Dendritic cell treated with granulocyte-macrophage colony-stimulating factor and Interleukin-4, amounts not matched to agents 40 ng/mL and 50 ng/mL, for 4 days (primary cell): ENCODE measurements at regions of chr12 and their contacts with region 1.

Region 1: GRCh38 chr12:110501752-110502738 is at the starts of genes RAD9B and VPS29:
- H3K4me3 Mint-ChIP-seq: peak within 1 kb of the TSS; percentile 89
- H3K27ac Mint-ChIP-seq: peak within 1 kb of the TSS; percentile 92
- H3K4me1 Mint-ChIP-seq: peaks cover 28% of the 10 kb centered on the region
- H3K27me3 Mint-ChIP-seq: no peaks in the 10 kb centered on the region

Region 2: GRCh38 chr12:110431957-110432587 is 70.0 kb before region 1 on chr12:
- intact Hi-C with region 1: no loop called
- H3K4me3 Mint-ChIP-seq: no peak overlapping the region
- H3K27ac Mint-ChIP-seq: peak overlapping the region; percentile 93
- H3K4me1 Mint-ChIP-seq: peaks cover 7% of the 10 kb centered on the region
- H3K27me3 Mint-ChIP-seq: no peaks in the 10 kb centered on the region

Region 3: GRCh38 chr12:110468212-110469048 is 33.6 kb before region 1 on chr12 and contains the starts of genes FAM216A and GPN3:
- intact Hi-C with region 1: loop called (anchors 5 kb)
- H3K4me3 Mint-ChIP-seq: peak within 1 kb of the TSS; percentile 96
- H3K27ac Mint-ChIP-seq: peak within 1 kb of the TSS; percentile 84
- H3K4me1 Mint-ChIP-seq: peaks cover 33% of the 10 kb centered on the region
- H3K27me3 Mint-ChIP-seq: no peaks in the 10 kb centered on the region

Region 4: DNA sequence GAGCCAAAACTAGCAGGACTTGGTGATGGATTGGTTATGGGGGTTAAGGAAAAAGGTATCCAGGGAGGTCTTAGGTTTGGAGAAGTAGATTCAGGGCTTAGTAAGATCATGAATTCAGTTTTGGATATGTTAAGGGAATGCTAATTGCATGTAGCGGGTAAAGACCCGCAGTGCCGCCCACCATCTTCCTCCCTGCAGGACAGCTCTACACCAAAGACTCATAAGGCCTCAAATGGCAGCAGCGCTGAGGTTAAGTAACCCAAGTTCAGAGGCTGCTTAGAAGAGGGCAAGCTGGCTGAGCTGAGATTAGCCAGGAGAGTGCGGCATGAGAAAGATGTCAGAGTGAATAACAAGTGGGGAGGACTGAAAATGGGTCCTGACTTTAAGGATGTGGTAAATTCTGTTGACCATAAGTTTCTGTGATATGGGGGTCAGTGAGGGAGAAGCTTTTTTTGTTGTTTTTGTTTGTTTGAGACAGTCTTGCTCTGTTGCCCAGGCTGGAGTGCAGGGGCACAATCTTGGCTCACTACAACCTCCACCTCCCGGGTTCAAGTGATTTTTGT is 26.3 kb after region 1 on chr12:
- intact Hi-C with region 1: no loop called
- H3K4me3 Mint-ChIP-seq: no peak overlapping the region
- H3K27ac Mint-ChIP-seq: no peak overlapping the region
- H3K4me1 Mint-ChIP-seq: no peaks in the 10 kb centered on the region
- H3K27me3 Mint-ChIP-seq: no peaks in the 10 kb centered on the region

Region 5: DNA sequence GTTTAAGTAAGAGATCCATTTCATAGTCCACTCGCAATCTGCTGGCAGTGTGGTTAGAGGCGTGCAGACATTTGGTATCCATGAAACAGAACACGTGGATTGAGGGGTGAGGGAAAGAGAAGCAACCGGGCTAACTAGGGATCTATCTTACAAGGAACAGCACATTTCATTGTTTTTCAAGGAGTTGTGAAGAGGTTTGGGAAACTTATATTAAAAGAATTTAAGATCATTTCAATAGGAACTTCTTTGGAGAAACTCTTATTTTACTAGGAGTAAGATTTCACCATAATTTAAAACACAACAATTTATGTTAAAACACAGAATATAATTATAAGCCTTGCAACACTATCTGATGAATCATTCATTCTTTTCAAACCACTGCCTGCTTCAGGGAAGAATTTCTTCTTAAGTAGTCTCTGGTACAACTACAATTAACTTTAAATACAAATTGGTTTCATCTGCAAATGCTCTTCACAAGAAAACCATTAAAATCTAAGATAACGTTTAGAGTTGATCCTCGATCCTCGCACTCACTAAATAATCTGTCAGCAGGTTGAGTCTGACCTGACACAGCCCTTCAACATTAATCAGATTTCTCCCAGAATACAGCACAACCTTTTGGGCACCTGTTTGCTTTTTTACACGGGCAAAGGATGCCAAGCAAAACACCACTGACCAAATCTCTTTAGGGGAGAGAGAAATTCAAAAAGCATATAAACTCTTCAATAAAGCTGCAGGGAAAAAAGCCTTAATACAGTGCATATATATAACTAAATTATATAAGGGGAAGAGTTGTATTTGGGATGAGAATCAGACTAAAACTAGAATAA is 53.7 kb after region 1 on chr12:
- intact Hi-C with region 1: loop called (anchors 10 kb)
- H3K4me3 Mint-ChIP-seq: no peak overlapping the region
- H3K27ac Mint-ChIP-seq: peak overlapping the region; percentile 50
- H3K4me1 Mint-ChIP-seq: peaks cover 47% of the 10 kb centered on the region
- H3K27me3 Mint-ChIP-seq: no peaks in the 10 kb centered on the region